ENCODE measurements at regions of chr3 and their contacts with region 1.

Region 1: GRCh38 chr3:127652231-127652995 is 20.3 kb upstream of the ABTB1 start:
- DNase-seq: no peak
- H3K4me3 ChIP-seq: no peak overlapping the region
- CTCF ChIP-seq: peak; percentile 81

Region 2: GRCh38 chr3:127520982-127521381 is 131.4 kb before region 1 on chr3:
- CTCF ChIA-PET with region 1: no interaction called
- POLR2A ChIA-PET with region 1: no interaction called
- DNase-seq: no peak
- H3K4me3 ChIP-seq: no peak overlapping the region
- CTCF ChIP-seq: no peak

Region 3: DNA sequence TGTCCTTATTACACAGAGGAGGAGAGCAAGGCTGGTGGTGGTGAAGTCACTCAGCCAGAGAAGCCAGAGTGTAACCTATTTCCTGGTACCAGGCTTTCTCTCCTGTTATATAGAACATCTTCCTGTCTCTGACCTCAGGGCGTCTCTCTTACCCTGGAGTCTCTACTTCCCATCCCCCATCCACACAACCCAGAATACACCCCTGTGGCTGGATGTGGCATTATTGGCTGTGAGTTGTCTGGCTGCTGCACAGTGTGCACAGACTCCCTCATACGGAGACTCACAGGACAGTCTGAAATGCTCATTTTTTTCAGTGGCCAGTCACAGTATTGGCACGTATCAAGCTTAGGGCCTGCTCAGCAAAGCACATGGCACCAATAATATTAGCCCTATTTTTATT is 14.9 kb before region 1 on chr3:
- CTCF ChIA-PET with region 1: interaction called, 33 read pairs
- POLR2A ChIA-PET with region 1: no interaction called
- DNase-seq: no peak
- H3K4me3 ChIP-seq: no peak overlapping the region
- CTCF ChIP-seq: no peak

Region 4: DNA sequence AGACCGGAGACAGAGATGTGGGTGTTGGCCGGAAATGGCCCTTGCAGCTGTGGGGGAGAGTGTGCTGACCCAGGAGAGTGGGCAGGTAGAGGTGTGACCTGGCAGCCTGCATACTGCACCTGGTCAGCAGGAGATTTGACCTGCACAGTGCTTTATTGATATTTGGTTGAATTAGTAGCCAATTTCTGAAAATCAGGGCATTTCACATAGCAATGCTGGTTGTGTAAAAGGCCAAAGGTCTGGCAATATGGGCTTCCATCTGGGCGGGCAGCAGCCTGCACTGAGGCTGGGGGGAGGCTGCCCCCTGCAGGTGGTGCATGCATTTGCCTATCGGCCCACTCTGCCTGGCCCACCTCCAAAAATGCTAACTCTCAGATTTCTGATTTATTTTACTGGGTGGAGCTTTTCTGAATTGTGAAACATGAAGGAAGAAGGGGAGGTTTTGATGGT is 179.3 kb after region 1 on chr3:
- CTCF ChIA-PET with region 1: interaction called, 24 read pairs
- POLR2A ChIA-PET with region 1: no interaction called
- DNase-seq: no peak
- H3K4me3 ChIP-seq: no peak overlapping the region
- CTCF ChIP-seq: peak; percentile 68

Region 5: DNA sequence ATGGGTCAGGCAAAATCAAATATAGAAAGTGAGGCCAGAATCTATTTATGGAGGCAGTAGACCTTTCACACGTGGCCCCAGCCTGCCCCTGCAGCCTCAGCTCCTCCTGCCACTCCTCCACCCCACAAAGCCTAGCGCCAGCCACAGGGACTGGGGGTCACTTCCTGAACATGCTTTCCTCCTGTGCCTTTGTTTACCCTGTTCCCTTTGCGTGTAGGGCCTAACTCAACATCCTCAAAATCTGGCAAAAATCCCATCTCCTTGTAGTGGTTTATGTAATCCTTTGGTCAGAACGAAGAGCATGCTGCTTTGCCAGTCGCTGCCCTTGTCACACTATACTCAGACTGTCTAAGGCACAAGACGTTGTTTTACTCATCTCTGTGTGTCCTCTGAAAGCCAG is 302.2 kb after region 1 on chr3:
- CTCF ChIA-PET with region 1: interaction called, 49 read pairs
- POLR2A ChIA-PET with region 1: no interaction called
- DNase-seq: no peak
- H3K4me3 ChIP-seq: no peak overlapping the region
- CTCF ChIP-seq: no peak

Region 6: DNA sequence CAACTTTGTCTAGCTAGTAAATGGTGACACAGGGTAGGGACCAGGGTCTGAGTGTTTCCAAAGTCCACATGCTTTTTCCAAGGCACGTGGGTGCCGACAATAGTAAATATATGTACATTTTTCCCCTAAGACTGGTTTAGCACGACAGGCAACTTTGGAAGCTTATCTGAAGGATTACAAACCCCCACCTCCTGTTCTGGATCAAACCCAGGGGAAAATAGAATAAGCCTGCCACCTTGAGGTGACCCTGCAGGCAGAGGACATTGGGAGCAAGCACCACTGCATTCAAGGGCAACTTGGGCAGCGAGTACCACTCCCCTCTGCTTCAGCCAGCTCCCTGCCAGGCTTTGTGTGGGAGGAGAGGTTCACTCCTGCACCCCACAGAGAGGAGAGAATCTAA is 307.4 kb after region 1 on chr3:
- CTCF ChIA-PET with region 1: interaction called, 49 read pairs
- POLR2A ChIA-PET with region 1: no interaction called
- DNase-seq: no peak
- H3K4me3 ChIP-seq: no peak overlapping the region
- CTCF ChIP-seq: no peak

Region 7: GRCh38 chr3:127970966-127971592 is 318.7 kb after region 1 on chr3:
- CTCF ChIA-PET with region 1: interaction called, 107 read pairs
- POLR2A ChIA-PET with region 1: no interaction called
- DNase-seq: no peak
- H3K4me3 ChIP-seq: no peak overlapping the region
- CTCF ChIP-seq: peak; percentile 73

Region 8: DNA sequence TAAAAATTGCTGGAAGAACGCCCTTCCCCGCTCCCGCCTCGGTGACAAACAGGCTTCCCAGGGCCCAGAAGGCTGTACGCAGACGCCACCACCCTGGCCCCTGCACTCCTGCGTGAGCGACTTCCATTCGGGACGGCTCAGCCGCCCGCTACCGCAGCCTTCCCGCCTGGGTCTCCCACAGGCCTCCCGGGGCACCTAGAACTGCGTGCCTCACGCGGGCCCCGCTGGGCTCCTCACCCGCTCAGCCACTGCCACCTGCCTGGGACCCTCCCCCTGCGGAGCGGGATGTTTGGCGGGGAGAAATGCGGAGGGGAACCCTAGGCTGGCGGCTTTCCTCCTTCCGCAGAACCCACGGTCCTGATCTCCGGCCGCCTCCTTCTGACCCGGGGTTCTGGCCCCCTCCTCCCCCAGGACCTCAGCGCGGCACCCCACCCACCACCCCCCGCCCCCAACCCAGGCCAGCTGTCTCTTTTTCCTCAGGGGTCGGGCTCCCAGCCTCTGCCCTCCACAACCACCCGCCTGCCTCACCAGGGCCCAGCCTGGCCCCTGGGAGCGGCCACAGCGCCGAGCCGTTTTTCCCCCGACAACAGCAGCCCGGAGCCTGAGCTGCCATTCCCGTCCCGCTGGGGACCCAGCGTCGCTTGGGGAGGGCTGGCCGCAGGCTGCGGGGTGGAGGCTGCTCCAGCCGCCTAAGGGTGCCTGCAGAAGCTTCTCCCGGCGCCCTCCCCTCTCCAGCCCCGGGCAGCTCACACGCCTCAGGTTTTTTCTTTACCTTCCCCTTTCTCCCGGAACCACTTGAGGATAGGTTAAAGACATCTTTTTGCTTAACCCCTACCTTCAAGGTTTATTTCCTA is 1046.0 kb after region 1 on chr3:
- CTCF ChIA-PET with region 1: no interaction called
- POLR2A ChIA-PET with region 1: no interaction called
- DNase-seq: no peak
- H3K4me3 ChIP-seq: peak overlapping the region; percentile 51
- CTCF ChIP-seq: no peak